GM10248 (cell line): ENCODE measurements at regions of chr3 and their contacts with region 1.

Region 1: DNA sequence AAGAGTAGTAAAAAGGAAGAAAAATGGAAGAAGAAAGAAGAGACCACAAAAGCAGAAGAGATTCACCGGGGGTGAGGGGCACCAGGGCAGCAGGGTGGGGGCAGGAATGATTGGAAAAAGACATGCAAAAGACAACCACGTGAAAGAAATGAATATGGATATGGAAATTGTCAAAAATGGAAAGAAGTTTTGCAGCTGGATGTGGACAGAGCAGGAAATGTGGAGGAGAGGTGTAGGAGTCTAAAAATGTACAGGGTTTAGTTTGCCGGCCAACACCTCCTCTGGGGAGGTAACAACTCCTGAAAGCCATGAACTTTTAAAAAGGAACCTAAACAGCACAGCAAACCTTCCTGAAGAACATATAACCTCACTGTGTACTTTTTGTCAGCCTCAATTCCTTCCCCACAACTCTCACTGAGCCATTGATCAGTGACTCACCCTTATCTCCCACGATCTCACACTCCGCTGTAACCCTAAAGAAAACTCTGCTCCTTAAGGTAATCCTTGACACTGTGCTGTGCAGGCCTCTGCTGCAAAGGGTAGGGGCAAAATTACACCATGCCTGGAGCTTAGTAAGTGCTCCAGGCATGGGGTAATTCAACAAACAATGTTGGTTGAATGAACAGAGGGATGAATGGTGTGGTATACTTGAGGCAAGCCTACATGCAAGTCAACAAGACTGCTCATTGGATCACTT is 100.2 kb upstream of the BOC start:
- DNase-seq: no peak
- CTCF ChIP-seq: no peak

Region 2: DNA sequence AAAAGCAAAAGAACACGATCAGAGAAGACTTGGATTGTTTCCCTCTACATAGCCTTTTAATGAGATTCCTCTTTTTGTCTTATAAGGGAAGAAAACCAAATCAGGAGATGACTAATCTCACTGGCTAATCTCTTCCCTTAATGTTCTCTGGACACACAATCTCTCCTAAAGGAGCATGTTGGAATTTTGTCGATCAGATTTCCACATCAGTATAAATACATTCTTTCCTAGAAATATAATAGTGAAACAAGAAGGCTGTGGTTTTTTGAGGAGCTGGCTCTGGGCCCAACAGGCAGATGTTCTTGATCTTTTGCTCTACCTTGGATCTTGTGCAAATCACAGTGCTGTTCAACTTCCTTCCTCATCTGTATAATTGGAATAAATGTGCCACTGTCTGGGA is 26.4 kb before region 1 on chr3:
- CTCF ChIA-PET with region 1: no interaction called
- POLR2A ChIA-PET with region 1: no interaction called
- DNase-seq: no peak
- CTCF ChIP-seq: no peak

Region 3: GRCh38 chr3:113100063-113100462 is 11.1 kb before region 1 on chr3:
- CTCF ChIA-PET with region 1: interaction called, 14 read pairs
- POLR2A ChIA-PET with region 1: no interaction called
- DNase-seq: no peak
- CTCF ChIP-seq: no peak

Region 4: GRCh38 chr3:113128386-113129015 is 17.3 kb after region 1 on chr3:
- CTCF ChIA-PET with region 1: no interaction called
- POLR2A ChIA-PET with region 1: no interaction called
- DNase-seq: no peak
- CTCF ChIP-seq: no peak